IMR-90 (cell line): ENCODE measurements at regions of chrX and their contacts with region 1.

Region 1: DNA sequence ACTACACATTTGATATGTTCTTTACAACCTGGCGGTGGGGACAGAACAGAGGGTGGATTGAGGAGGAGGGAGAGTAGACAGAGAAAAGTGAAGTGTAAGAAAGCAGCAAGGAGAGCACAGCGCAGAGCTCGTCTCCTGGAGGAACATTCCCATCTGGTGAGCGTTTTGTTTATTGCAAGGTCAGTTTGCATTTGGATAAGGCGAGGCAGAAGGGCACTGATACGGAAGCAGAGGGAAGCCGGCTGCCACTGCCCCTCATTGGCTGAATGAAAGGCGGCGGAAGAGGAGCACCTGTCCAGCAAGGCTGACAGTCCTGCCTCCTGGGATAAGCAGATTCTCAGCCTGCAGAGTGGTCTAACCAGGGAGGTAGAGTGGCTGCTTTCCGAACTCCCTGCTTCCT is 83.2 kb downstream of the GPR143 start:
- DNase-seq: peak; percentile 61
- ATAC-seq: peak; percentile 81
- H3K4me3 ChIP-seq: no peak overlapping the region
- H3K27ac ChIP-seq: no peak overlapping the region
- H3K4me1 ChIP-seq: peaks cover 2% of the 10 kb centered on the region; the same call in 1 of the 2 replicates
- H3K27me3 ChIP-seq: no peaks in the 10 kb centered on the region
- CTCF ChIP-seq: peak; percentile 49
- POLR2A ChIP-seq: no peak
- RAD21 ChIP-seq: peak; percentile 63

Region 2: GRCh38 chrX:8820910-8821527 is 861.4 kb before region 1 on chrX:
- CTCF ChIA-PET with region 1: no interaction called
- POLR2A ChIA-PET with region 1: no interaction called
- dilution Hi-C with region 1: no loop called
- in situ Hi-C with region 1: loop called (anchors 10 kb)
- intact Hi-C with region 1: loop called (anchors 1 kb)
- DNase-seq: peak; percentile 6
- ATAC-seq: no peak
- H3K4me3 ChIP-seq: no peak overlapping the region
- H3K27ac ChIP-seq: no peak overlapping the region
- H3K4me1 ChIP-seq: no peaks in the 10 kb centered on the region
- H3K27me3 ChIP-seq: no peaks in the 10 kb centered on the region
- CTCF ChIP-seq: 0 out of 2 replicates have a peak, but pooled peaks have one; percentile 14
- POLR2A ChIP-seq: no peak
- RAD21 ChIP-seq: 0 out of 2 replicates have a peak, but pooled peaks have one; percentile 10

Region 3: GRCh38 chrX:8960817-8961489 is 721.5 kb before region 1 on chrX:
- CTCF ChIA-PET with region 1: no interaction called
- POLR2A ChIA-PET with region 1: no interaction called
- dilution Hi-C with region 1: no loop called
- in situ Hi-C with region 1: loop called (anchors 10 kb)
- intact Hi-C with region 1: no loop called
- DNase-seq: no peak
- ATAC-seq: no peak
- H3K4me3 ChIP-seq: no peak overlapping the region
- H3K27ac ChIP-seq: no peak overlapping the region
- H3K4me1 ChIP-seq: no peaks in the 10 kb centered on the region
- H3K27me3 ChIP-seq: peaks cover 4% of the 10 kb centered on the region; the same call in 1 of the 2 replicates
- CTCF ChIP-seq: no peak
- POLR2A ChIP-seq: no peak
- RAD21 ChIP-seq: no peak

Region 4: GRCh38 chrX:9341291-9342201 is 340.9 kb before region 1 on chrX:
- CTCF ChIA-PET with region 1: no interaction called
- POLR2A ChIA-PET with region 1: no interaction called
- dilution Hi-C with region 1: no loop called
- in situ Hi-C with region 1: no loop called
- intact Hi-C with region 1: loop called (anchors 5 kb)
- DNase-seq: peak; percentile 69
- ATAC-seq: peak; percentile 19
- H3K4me3 ChIP-seq: peak overlapping the region; percentile 9; the same call in 1 of the 2 replicates
- H3K27ac ChIP-seq: peak overlapping the region; percentile 97
- H3K4me1 ChIP-seq: peaks cover 10% of the 10 kb centered on the region
- H3K27me3 ChIP-seq: no peaks in the 10 kb centered on the region
- CTCF ChIP-seq: no peak
- POLR2A ChIP-seq: no peak
- RAD21 ChIP-seq: 0 out of 2 replicates have a peak, but pooled peaks have one; percentile 2

Region 5: DNA sequence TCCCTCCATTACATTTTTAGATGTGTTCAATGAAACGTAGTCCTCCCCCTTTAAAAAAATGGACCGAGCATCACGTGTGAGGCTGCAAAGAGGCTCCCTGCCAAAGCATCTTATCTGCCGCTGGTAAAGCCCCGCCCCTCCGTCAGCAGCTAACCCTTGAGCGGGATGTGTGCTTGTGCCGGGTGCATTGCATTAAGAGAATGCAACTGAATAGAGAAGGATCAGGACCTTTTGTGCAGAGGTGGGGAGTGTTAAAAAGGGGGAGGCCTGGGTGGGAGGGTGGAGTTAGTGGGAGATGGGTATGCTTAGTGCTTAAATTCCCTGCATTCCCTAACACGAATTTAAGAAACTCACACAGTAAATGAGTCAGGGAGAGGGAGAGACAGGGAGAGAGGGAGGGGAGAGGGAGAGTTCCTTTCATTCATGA is 151.6 kb before region 1 on chrX:
- CTCF ChIA-PET with region 1: no interaction called
- POLR2A ChIA-PET with region 1: no interaction called
- dilution Hi-C with region 1: no loop called
- in situ Hi-C with region 1: no loop called
- intact Hi-C with region 1: loop called (anchors 2 kb)
- DNase-seq: peak; percentile 88
- ATAC-seq: peak; percentile 91
- H3K4me3 ChIP-seq: no peak overlapping the region
- H3K27ac ChIP-seq: no peak overlapping the region
- H3K4me1 ChIP-seq: peaks cover 29% of the 10 kb centered on the region
- H3K27me3 ChIP-seq: no peaks in the 10 kb centered on the region
- CTCF ChIP-seq: no peak
- POLR2A ChIP-seq: no peak
- RAD21 ChIP-seq: no peak